Prostate gland (tissue), 2 donors: ENCODE measurements at regions of chr15 and their contacts with region 1.

Region 1: DNA sequence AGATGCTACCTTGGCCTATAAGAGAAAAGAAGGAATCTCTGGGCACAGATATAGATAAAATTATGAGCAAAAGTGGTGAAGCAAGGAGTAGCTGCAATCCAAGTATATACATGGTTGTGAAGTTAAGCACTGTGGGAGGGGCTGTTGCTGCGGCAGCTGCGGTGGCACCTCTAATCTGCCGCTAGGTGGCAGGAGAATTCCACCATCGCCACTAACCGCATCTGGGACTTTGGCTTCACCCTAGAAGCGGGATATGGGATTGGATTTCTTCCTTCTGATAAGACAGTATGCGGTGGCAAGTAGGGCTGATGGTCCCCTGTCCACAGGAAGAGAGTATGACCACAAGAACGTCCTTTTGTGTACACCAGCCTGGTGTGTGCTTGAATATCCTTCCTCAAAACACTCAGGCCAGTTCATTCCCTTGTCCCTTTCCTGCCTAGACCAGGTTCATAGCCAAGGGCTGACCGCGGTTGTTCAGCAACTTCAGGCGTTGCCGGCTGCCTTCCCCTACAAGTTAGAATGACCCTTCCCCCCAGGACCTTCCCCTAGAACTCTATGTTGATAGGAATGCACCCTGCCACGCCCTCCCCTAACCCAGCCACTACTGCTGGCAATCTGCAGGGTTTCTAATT is 5.1 kb downstream of the MAGEL2 start:
- DNase-seq: peak; percentile 32
- H3K4me3 ChIP-seq: no peak overlapping the region
- H3K27ac ChIP-seq: no peak overlapping the region
- H3K4me1 ChIP-seq: no peaks in the 10 kb centered on the region
- H3K27me3 ChIP-seq: no peaks in the 10 kb centered on the region
- CTCF ChIP-seq: peak in 3 of 4 experiments; percentile 67 to 76 (median 73)
- POLR2A ChIP-seq: no peak

Region 2: DNA sequence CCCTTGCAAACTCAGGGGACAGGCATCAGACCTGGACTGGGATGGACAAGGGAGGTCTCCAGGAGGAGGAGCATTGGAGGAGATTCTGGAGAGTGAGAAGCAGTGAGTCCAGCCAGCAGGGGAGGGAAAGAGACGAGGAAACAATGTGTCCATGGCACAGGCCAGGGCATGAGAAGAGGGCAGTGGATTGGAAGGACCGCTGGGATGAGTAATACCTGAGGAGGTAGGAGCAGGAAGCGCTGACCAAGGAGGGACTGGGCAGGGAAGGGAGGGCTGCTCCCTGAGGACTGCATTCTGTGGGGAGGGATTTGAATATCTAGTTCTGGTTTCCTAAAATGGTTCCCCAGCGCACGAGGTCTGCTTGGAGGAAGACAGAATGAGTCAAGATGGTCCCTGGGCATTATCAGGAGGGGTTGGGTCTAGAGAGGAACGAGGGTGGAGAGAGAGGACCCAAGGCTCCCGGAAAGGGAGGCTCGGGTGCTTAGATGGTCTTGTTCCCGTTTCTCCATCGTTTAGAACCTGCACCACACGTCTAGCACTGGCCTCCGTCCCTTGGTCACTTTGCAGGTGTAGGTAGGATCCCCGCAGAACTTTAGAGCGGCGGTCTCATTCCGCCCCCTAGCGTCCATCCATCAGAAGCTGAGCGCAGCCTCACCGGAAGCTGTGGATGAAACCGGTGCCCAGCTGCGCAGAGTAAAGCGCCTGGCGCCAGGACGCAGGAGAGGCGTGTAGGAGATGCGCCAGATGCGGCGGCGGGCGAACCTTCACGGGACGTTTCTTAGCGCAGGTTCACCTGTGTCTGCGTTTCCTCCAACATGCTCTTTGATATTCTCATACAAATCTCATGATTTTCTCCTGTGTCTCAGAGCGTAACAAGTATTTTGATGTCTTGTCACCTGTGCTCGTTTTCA is 235.2 kb after region 1 on chr15:
- intact Hi-C with region 1: loop called (anchors 10 kb)
- DNase-seq: no peak
- H3K4me3 ChIP-seq: no peak overlapping the region
- H3K27ac ChIP-seq: no peak overlapping the region
- H3K4me1 ChIP-seq: no peaks in the 10 kb centered on the region
- H3K27me3 ChIP-seq: no peaks in the 10 kb centered on the region
- CTCF ChIP-seq: peak; percentile 8 to 57 (median 43)
- POLR2A ChIP-seq: no peak